Mucosa of descending colon (tissue), 3 donors: ENCODE measurements at regions of chrX and their contacts with region 1.

Region 1: GRCh38 chrX:136209016-136209738 is 42.0 kb downstream of the MAP7D3 start:
- DNase-seq: peak; percentile 55 to 61 (median 59)
- ATAC-seq: peak; percentile 54
- H3K4me3 ChIP-seq: no peak overlapping the region
- H3K4me1 ChIP-seq: no peaks in the 10 kb centered on the region
- CTCF ChIP-seq: peak; percentile 27

Region 2: GRCh38 chrX:136168929-136169735 is 40.0 kb before region 1 on chrX:
- intact Hi-C with region 1: loop called in 1 of 2 experiments (anchors 5 kb)
- DNase-seq: peak in 1 of 3 donors; percentile 23
- ATAC-seq: peak; percentile 68
- H3K4me3 ChIP-seq: no peak overlapping the region
- H3K4me1 ChIP-seq: no peaks in the 10 kb centered on the region
- CTCF ChIP-seq: no peak

Region 3: DNA sequence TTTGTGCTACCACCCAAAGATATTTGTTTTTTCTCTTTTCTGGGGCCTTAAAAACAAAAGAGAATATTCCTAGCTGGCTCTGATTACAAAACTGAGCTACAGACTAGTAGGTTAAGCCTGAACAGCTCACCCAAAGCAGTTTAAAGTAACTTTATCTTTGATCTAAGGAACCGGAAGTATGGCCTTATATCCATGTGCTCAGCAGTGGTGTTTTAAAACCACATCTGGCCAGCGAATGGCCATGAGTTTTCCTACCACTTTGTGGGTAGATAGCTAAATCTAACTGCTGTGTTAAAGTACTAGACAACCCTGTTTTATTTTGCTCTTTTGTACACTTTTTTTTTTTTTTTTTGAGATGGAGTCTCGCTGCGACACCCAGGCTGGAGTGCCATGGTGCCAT is 116.2 kb after region 1 on chrX:
- intact Hi-C with region 1: no loop called
- DNase-seq: no peak
- ATAC-seq: no peak
- H3K4me3 ChIP-seq: no peak overlapping the region
- H3K4me1 ChIP-seq: no peaks in the 10 kb centered on the region
- CTCF ChIP-seq: no peak

Region 4: DNA sequence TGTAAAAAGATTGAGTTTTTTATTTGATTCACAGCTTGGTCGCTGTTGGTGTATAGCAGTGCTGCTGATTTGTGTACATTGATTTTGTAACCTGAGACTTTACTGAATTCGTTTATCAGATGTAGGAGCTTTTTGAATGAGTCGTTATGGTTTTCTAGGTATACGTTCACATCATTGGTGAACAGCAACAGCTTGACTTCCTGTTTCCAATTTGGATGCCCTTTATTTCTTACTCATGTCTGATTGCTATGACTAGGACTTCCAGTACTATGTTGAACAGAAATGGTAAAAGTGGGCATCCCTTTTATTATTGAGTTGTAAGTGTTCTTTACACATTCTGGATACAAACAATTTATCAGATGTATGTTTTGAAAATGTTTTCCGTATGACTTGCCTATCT is 167.5 kb after region 1 on chrX:
- intact Hi-C with region 1: no loop called
- DNase-seq: no peak
- ATAC-seq: no peak
- H3K4me3 ChIP-seq: no peak overlapping the region
- H3K4me1 ChIP-seq: no peaks in the 10 kb centered on the region
- CTCF ChIP-seq: no peak